ENCODE measurements at regions of chr15 and their contacts with region 1.

Region 1: DNA sequence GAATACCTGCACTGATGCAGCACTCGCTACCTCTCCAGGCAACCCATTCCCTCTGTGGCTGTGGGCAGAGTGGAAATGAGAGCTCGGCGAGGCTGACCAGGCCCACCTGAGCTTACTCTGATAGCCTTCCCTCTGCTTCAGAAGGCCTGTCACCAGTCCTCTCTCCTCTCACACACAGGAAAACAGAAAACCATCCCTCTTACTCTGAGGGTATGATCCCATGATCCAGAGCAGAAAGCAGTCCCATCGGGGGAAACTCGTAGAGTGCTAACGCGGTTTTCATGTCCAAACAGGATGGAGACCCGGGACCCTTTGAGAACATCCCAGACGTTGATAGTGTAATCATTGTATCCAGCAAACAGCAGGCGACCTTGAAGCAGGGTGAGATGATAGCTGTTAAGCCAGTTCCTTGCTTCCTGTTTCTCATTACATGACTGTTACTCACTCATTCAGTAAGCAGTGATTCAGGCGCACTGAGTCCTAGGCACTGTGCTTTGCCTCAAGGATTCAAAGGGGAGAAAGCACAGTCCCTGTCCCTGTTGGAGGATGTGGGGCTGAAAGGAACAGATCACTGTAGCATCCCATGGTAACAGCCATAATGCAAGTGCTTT is 11.8 kb upstream of the BCL2L10 start:
- DNase-seq: no peak
- ATAC-seq: peak in 1 of 4 experiments; percentile 8
- H3K4me3 ChIP-seq: no peak overlapping the region
- H3K4me3 Mint-ChIP-seq: no peak overlapping the region
- H3K27ac ChIP-seq: no peak overlapping the region
- H3K27ac Mint-ChIP-seq: no peak overlapping the region
- H3K4me1 ChIP-seq: no peaks in the 10 kb centered on the region
- H3K4me1 Mint-ChIP-seq: no peaks in the 10 kb centered on the region
- H3K27me3 ChIP-seq: no peaks in the 10 kb centered on the region
- H3K27me3 Mint-ChIP-seq: no peaks in the 10 kb centered on the region

Region 2: GRCh38 chr15:50945725-50946124 is 1178.7 kb before region 1 on chr15:
- CTCF ChIA-PET with region 1: no interaction called
- POLR2A ChIA-PET with region 1: interaction called in 1 of 2 experiments, 11 read pairs
- DNase-seq: no peak
- ATAC-seq: no peak
- H3K4me3 ChIP-seq: no peak overlapping the region
- H3K4me3 Mint-ChIP-seq: no peak overlapping the region
- H3K27ac ChIP-seq: no peak overlapping the region
- H3K27ac Mint-ChIP-seq: no peak overlapping the region
- H3K4me1 ChIP-seq: no peaks in the 10 kb centered on the region
- H3K4me1 Mint-ChIP-seq: no peaks in the 10 kb centered on the region
- H3K27me3 ChIP-seq: no peaks in the 10 kb centered on the region
- H3K27me3 Mint-ChIP-seq: no peaks in the 10 kb centered on the region

Measured in T-cell (primary cell).